ENCODE measurements at regions of chr15 and their contacts with region 1.

Region 1: GRCh38 chr15:68631601-68632051 is 52.8 kb downstream of the CORO2B start:
- DNase-seq: peak; percentile 100
- H3K4me3 ChIP-seq: peak overlapping the region; percentile 54
- H3K27ac ChIP-seq: peak overlapping the region; percentile 97
- H3K4me1 ChIP-seq: peaks cover 97% of the 10 kb centered on the region
- CTCF ChIP-seq: peak; percentile 90

Region 2: GRCh38 chr15:68492855-68493254 is 138.8 kb before region 1 on chr15:
- CTCF ChIA-PET with region 1: no interaction called
- POLR2A ChIA-PET with region 1: no interaction called
- intact Hi-C with region 1: no loop called
- DNase-seq: no peak
- H3K4me3 ChIP-seq: no peak overlapping the region
- H3K27ac ChIP-seq: no peak overlapping the region
- H3K4me1 ChIP-seq: no peaks in the 10 kb centered on the region
- CTCF ChIP-seq: no peak

Region 3: DNA sequence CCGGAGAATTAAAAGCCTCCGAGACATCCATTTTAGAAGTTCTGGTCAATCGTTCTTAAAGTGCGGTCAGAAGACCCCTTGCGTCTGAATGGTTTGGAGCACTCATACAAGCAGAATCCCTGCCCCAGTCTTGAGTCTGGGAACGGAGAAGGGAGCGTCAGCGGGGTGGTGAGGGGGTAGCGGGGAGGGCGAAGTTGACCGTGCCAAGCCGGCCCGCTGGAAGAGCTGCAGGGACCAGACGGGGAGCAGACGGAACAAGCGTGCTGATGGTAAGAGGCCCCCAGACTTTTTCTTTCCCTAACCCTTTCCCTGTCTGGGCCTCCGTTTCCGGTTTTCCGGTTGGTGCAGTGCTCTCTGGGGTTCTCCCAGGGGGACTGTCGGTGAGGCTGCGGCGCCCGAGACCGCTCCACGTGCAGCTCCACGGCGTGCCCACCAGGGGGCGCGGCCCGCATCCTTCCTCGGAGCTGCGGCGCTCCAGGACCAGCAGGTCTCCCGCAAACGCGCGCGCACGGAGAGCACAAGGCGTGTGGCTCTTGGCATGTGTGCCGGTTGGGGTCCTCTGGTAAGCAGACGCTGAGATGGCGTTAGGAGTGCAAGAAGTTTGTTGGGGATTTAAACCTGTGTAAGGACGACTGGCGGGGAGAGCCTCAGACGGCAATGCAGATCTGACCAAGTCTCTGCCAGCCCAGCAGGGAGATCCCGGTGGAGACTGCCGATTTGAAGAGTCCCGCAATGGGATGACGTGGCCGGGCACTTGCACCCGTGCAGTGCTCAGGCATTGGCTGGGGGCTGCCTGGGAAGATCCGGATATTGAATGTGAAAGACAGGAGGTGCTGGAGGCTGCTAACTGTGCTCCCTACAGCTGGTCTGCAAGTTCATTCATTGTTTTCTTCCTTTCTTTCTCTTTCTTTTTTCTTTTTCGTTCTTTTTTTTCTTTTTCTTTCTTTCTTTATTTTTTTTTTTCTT is 72.0 kb before region 1 on chr15:
- CTCF ChIA-PET with region 1: interaction called, 12 read pairs
- POLR2A ChIA-PET with region 1: interaction called, 5 read pairs
- intact Hi-C with region 1: loop called (anchors 1 kb)
- DNase-seq: peak; percentile 88
- H3K4me3 ChIP-seq: peak overlapping the region; percentile 78
- H3K27ac ChIP-seq: peak overlapping the region; percentile 66
- H3K4me1 ChIP-seq: peaks cover 41% of the 10 kb centered on the region
- CTCF ChIP-seq: peak; percentile 94

Region 4: DNA sequence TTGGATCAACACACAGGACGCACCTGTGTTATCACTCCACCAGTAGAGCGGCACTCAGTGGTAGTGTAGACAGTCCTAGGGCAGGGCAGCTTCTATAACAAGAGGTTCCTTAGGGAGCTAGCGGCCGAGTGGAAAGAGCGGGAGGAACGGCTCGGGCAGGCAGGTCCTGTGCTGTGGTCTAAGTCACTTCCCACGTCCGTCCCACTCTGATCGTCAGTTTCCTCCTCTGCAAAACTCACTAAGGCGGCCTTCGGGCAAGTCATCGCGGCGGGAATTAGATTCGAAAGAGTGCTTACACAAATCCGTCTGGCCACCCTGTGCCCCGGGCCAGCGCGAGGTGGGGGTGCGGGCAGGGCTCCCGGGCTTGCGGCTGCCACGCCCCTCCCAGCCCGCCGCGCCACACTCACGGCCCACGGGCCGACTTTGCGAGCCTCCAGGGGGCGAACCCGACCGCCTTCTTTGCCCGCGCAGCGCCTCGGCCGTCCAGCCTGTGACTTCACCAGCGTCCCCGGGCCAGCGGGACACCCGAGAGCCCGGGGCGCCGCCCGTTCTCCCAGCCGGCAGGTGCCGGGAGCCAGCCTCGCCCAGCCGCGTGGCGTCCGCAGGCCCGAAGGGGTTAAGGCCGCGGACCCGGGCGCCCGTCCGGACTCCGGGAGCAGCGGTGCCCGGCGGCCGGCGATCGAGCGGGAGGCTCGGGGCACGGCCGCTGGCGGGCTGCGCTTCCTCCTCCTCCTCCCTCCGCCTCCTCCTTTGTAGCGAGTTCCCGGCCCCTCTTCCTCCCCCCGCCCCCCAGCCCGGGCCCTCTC is 53.2 kb before region 1 on chr15:
- CTCF ChIA-PET with region 1: interaction called, 4 read pairs
- POLR2A ChIA-PET with region 1: interaction called, 6 read pairs
- intact Hi-C with region 1: loop called (anchors 1 kb)
- DNase-seq: peak; percentile 76
- H3K4me3 ChIP-seq: peak overlapping the region; percentile 77
- H3K27ac ChIP-seq: peak overlapping the region; percentile 65
- H3K4me1 ChIP-seq: peaks cover 80% of the 10 kb centered on the region
- CTCF ChIP-seq: peak; percentile 67

Region 5: DNA sequence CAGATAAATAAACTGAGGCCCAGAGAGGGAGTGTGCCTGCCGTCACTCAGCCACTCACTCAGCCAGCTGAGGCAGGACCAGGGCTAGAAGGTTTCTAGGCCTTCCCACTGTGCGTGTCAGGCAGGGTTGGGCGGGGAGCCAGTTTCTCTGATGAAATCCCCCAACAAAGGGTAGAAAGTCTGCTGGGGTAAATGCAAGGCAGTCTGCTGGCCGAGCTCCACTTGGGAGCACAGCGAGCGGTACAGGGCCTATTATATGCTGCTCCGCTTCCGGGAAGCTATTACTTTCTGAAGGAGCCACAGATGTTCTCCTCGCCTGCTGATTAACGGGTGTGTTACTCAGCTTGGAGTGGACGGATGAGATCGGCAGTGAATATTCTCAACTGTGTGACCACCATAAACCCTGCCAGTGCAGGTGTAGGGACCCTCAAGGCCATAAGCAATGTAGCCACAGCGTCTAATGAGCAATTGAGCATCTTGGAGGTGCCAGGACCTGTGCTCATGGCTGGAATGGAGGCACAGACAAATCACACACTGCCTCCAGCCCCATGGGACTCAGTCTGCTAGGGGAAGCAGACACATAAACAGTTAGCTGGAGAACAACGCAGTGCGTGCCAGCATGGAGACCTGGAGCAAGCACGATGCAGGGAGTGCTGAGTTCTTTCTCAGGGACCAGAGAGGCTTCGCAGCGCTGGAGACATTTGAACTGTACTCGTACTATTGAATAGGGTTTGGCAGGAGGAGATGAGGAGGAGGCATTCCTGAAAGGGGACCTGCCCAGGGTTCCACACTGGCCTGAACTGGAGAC is 10.7 kb before region 1 on chr15:
- CTCF ChIA-PET with region 1: interaction called, 10 read pairs
- POLR2A ChIA-PET with region 1: interaction called, 8 read pairs
- intact Hi-C with region 1: no loop called
- DNase-seq: no peak
- H3K4me3 ChIP-seq: no peak overlapping the region
- H3K27ac ChIP-seq: no peak overlapping the region
- H3K4me1 ChIP-seq: peaks cover 81% of the 10 kb centered on the region
- CTCF ChIP-seq: no peak

Region 6: GRCh38 chr15:68650901-68651709 is 19.5 kb after region 1 on chr15:
- CTCF ChIA-PET with region 1: interaction called, 6 read pairs
- POLR2A ChIA-PET with region 1: interaction called, 13 read pairs
- intact Hi-C with region 1: loop called (anchors 1 kb)
- DNase-seq: peak; percentile 62
- H3K4me3 ChIP-seq: no peak overlapping the region
- H3K27ac ChIP-seq: peak overlapping the region; percentile 23
- H3K4me1 ChIP-seq: peaks cover 56% of the 10 kb centered on the region
- CTCF ChIP-seq: peak; percentile 91

Region 7: GRCh38 chr15:68672781-68673205 is 41.2 kb after region 1 on chr15:
- CTCF ChIA-PET with region 1: interaction called, 29 read pairs
- POLR2A ChIA-PET with region 1: interaction called, 10 read pairs
- intact Hi-C with region 1: loop called (anchors 1 kb)
- DNase-seq: peak; percentile 70
- H3K4me3 ChIP-seq: no peak overlapping the region
- H3K27ac ChIP-seq: peak overlapping the region; percentile 14
- H3K4me1 ChIP-seq: peaks cover 47% of the 10 kb centered on the region
- CTCF ChIP-seq: peak; percentile 76